Activated CD4-positive, alpha-beta memory T cell treated with anti-CD3 and anti-CD28 coated beads for 36 hours (primary cell): ENCODE measurements at regions of chr14 and their contacts with region 1.

Region 1: DNA sequence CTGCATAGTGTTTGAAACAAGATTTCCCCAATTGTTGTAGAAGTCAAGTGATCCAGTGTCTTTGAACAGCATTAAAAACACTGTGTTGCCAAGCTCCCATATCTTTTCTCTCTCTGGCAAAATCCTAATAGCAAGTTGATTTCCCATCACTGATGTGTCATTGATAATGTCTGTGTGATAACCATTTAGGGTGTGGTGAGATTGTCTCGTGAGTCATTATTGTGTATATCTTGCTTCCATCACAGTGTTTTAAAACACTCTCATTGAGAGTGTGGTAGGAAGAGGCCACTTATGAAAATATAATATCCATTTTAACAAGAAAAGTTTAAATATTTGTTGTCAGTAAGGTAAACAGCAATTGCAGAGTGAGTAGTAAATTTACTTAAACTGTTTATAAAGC is 74.7 kb downstream of the PRORP start:
- DNase-seq: no peak
- H3K4me3 Mint-ChIP-seq: no peak overlapping the region
- H3K27ac Mint-ChIP-seq: peak overlapping the region; percentile 65
- H3K4me1 Mint-ChIP-seq: peaks cover 34% of the 10 kb centered on the region
- H3K27me3 Mint-ChIP-seq: no peaks in the 10 kb centered on the region

Region 2: DNA sequence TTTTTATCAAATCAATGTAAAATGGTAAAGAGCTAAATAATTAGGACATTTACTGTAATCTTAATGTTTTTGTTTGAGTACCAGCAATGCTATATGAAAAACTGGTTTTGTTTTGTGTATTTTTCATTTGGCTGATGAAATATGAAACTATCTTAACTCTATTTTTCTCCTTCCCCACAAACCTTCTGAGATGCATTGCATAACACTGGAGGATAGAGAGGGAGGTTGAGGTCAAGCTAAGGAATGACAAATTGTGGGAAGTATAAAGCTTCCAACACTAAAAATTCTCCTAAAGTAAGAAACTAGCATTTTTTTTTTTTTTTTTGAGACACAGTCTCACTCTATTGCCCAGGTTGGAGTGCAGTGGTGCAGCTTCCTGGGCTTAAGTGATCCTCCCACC is 245.7 kb before region 1 on chr14:
- CTCF ChIA-PET with region 1: no interaction called
- POLR2A ChIA-PET with region 1: no interaction called
- intact Hi-C with region 1: no loop called
- DNase-seq: no peak
- H3K4me3 Mint-ChIP-seq: no peak overlapping the region
- H3K27ac Mint-ChIP-seq: no peak overlapping the region
- H3K4me1 Mint-ChIP-seq: no peaks in the 10 kb centered on the region
- H3K27me3 Mint-ChIP-seq: no peaks in the 10 kb centered on the region

Region 3: GRCh38 chr14:35159742-35160409 is 37.1 kb before region 1 on chr14:
- CTCF ChIA-PET with region 1: no interaction called
- POLR2A ChIA-PET with region 1: no interaction called
- intact Hi-C with region 1: loop called (anchors 2 kb)
- DNase-seq: no peak
- H3K4me3 Mint-ChIP-seq: peak overlapping the region; percentile 16
- H3K27ac Mint-ChIP-seq: peak overlapping the region; percentile 79
- H3K4me1 Mint-ChIP-seq: peaks cover 57% of the 10 kb centered on the region
- H3K27me3 Mint-ChIP-seq: no peaks in the 10 kb centered on the region